Esophagus muscularis mucosa (tissue), 4 donors: ENCODE measurements at regions of chr6 and their contacts with region 1.

Region 1: GRCh38 chr6:34986845-34987246 is 97.8 kb downstream of the ANKS1A start:
- DNase-seq: no peak
- H3K4me3 ChIP-seq: no peak overlapping the region
- H3K27ac ChIP-seq: peak overlapping the region in 3 of 4 donors; percentile 28 to 42 (median 35)
- H3K4me1 ChIP-seq: peaks cover 6 to 23% (median 22%) of the 10 kb centered on the region in 4 donors
- H3K27me3 ChIP-seq: no peaks in the 10 kb centered on the region
- CTCF ChIP-seq: peak; percentile 77 to 91 (median 86)
- EP300 ChIP-seq: no peak
- POLR2A ChIP-seq: no peak

Region 2: DNA sequence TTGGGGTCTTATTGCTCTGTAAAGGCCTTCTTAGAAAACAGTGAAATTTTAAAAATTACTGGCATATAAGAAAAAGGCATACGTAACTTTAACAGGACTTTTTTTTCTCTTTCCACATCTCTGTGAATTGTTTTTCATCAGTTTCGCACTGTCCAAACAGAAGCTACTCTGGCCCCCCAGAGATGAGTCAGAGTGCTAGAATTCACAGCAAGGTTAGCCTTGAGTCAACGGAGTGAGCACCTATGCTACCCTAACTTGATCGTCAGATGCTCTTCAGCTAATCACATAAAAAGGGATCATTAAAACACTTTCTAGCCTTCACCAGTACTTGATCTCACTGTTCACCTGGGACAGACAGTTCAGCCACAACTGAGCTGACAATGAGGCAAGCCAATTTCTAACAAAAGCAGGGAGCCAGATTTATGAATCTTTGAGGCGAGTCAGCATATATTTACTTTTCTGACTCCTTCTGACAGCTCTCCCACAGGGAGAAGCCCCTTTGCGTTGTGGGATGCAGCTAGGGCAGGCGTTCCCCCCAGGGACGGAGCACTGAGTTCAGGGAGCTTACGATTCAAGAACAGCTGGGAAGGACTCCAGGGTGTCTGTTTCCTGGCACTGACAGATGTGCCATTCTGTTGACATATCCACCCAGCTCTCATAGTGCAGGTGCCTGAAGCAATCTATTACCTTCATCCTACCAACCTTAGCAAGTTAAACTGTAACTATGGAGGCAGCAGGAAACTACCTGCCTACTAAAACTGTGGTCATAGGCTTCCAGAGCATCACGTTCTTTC is 384.3 kb before region 1 on chr6:
- intact Hi-C with region 1: no loop called
- DNase-seq: no peak
- H3K4me3 ChIP-seq: no peak overlapping the region
- H3K27ac ChIP-seq: no peak overlapping the region
- H3K4me1 ChIP-seq: peaks cover 37 to 60% (median 51%) of the 10 kb centered on the region in 4 donors
- H3K27me3 ChIP-seq: no peaks in the 10 kb centered on the region
- CTCF ChIP-seq: no peak
- EP300 ChIP-seq: no peak
- POLR2A ChIP-seq: no peak

Region 3: DNA sequence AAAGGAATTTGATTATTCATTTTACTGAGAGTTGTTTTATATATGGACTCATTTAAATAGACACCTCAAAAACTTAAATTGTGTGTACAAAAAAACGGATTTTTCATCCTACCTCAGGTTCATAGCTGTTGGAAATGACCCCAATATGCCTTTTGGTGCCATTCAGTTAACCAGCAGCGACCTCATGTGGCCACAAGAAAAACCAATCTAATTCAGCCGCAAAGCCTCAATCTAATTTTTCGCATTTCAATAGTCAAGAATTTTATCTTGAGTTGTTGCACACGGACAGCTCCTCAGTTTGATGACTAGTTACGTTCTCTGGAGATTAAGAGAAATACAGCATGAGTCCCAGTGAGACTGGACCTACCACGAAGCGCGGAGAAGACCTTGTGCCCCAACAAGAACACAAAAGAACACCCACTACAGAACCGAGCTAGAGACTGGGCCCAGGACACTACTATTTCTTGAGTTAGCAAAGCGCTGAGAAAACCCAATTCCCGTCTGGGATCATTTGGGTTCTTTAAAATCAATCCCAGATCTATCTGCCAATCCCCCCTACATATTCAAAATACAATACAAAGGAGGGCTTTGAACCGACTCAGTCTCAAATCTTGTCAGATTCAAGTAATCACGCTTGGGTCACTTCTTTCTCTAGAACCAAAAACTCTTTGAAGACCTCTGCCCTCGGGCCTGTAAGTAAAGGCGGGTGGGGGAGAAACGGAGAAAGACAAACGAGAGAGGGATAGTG is 153.2 kb after region 1 on chr6:
- intact Hi-C with region 1: loop called (anchors 2 kb)
- DNase-seq: no peak
- H3K4me3 ChIP-seq: no peak overlapping the region
- H3K27ac ChIP-seq: no peak overlapping the region
- H3K4me1 ChIP-seq: peaks cover 0 to 25% (median 17%) of the 10 kb centered on the region in 4 donors
- H3K27me3 ChIP-seq: peaks cover 0 to 11% (median 0%) of the 10 kb centered on the region in 4 donors
- CTCF ChIP-seq: peak; percentile 79 to 87 (median 86)
- EP300 ChIP-seq: no peak
- POLR2A ChIP-seq: no peak

Region 4: GRCh38 chr6:35240840-35241801 is 254.3 kb after region 1 on chr6:
- intact Hi-C with region 1: loop called (anchors 10 kb)
- DNase-seq: no peak
- H3K4me3 ChIP-seq: no peak overlapping the region
- H3K27ac ChIP-seq: peak overlapping the region; percentile 25 to 60 (median 48)
- H3K4me1 ChIP-seq: peaks cover 28 to 72% (median 53%) of the 10 kb centered on the region in 4 donors
- H3K27me3 ChIP-seq: no peaks in the 10 kb centered on the region
- CTCF ChIP-seq: peak; percentile 92 to 97 (median 96)
- EP300 ChIP-seq: no peak
- POLR2A ChIP-seq: no peak

Region 5: DNA sequence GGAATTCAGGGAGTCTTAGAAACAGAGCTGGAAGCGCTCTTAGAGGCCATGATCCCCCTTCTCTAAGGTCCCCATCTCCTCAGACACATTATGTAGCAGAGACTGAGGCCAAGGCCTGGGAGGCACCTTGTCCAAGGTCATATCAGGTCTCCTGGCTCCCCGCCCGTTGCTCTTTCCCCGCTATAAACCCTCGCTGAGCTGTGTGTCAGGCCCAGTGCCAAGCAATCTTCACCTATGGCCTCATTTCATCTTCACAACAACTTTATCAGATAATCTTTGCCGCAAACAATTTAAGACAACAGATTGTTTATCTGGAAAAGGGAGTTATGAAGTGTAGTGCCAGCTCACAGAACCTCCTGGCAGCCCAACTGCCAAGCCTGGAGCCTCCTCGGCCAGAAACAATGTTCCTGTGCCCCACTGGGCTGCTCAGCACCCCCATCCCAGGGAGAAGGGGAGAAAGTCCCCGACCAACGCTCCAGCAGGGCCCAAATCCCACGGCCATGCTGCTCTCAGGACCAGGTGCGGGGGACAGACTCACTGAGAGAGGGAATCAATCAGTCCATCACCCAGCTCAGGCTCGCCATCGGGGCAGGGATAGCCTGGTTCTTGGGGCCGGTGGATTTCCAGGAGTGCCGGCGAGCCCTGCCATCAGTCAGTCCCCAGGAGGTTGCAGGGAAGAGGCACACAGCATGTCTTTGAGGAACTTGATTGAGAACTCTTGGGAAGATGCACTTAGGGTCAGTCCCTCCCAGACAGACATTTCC is 448.4 kb after region 1 on chr6:
- intact Hi-C with region 1: no loop called
- DNase-seq: no peak
- H3K4me3 ChIP-seq: no peak overlapping the region
- H3K27ac ChIP-seq: no peak overlapping the region
- H3K4me1 ChIP-seq: peaks cover 0 to 9% (median 7%) of the 10 kb centered on the region in 4 donors
- H3K27me3 ChIP-seq: no peaks in the 10 kb centered on the region
- CTCF ChIP-seq: no peak
- EP300 ChIP-seq: no peak
- POLR2A ChIP-seq: no peak